Heart right ventricle (tissue), 16 donors: ENCODE measurements at regions of chr16 and their contacts with region 1.

Region 1: GRCh38 chr16:14529010-14529669 is 100.9 kb downstream of the PARN start:
- DNase-seq: peak; percentile 55 to 81
- ATAC-seq: peak; percentile 79 to 90 (median 85)
- H3K4me3 ChIP-seq: peak overlapping the region in 7 of 10 donors; percentile 22 to 38 (median 24)
- H3K27ac ChIP-seq: peak overlapping the region in 6 of 10 donors; percentile 28 to 68 (median 53)
- H3K4me1 ChIP-seq: peaks cover 0 to 26% (median 11%) of the 10 kb centered on the region in 9 donors
- H3K27me3 ChIP-seq: no peaks in the 10 kb centered on the region
- CTCF ChIP-seq: peak; percentile 53 to 88 (median 76)

Region 2: GRCh38 chr16:13926464-13926863 is 602.7 kb before region 1 on chr16:
- intact Hi-C with region 1: loop called in 9 of 10 experiments (anchors 5 to 10 kb)
- DNase-seq: no peak
- ATAC-seq: no peak
- H3K4me3 ChIP-seq: no peak overlapping the region
- H3K27ac ChIP-seq: no peak overlapping the region
- H3K4me1 ChIP-seq: peaks cover 0 to 17% (median 13%) of the 10 kb centered on the region in 9 donors
- H3K27me3 ChIP-seq: no peaks in the 10 kb centered on the region
- CTCF ChIP-seq: no peak

Region 3: GRCh38 chr16:14285513-14286385 is 243.4 kb before region 1 on chr16:
- intact Hi-C with region 1: loop called in 2 of 10 experiments (anchors 5 kb)
- DNase-seq: peak; percentile 92 to 94
- ATAC-seq: peak; percentile 94 to 96 (median 95)
- H3K4me3 ChIP-seq: peak overlapping the region; percentile 67 to 95 (median 86)
- H3K27ac ChIP-seq: peak overlapping the region; percentile 17 to 89 (median 82)
- H3K4me1 ChIP-seq: peaks cover 0 to 21% (median 15%) of the 10 kb centered on the region in 9 donors
- H3K27me3 ChIP-seq: no peaks in the 10 kb centered on the region
- CTCF ChIP-seq: peak in 1 of 9 donors; percentile 1

Region 4: DNA sequence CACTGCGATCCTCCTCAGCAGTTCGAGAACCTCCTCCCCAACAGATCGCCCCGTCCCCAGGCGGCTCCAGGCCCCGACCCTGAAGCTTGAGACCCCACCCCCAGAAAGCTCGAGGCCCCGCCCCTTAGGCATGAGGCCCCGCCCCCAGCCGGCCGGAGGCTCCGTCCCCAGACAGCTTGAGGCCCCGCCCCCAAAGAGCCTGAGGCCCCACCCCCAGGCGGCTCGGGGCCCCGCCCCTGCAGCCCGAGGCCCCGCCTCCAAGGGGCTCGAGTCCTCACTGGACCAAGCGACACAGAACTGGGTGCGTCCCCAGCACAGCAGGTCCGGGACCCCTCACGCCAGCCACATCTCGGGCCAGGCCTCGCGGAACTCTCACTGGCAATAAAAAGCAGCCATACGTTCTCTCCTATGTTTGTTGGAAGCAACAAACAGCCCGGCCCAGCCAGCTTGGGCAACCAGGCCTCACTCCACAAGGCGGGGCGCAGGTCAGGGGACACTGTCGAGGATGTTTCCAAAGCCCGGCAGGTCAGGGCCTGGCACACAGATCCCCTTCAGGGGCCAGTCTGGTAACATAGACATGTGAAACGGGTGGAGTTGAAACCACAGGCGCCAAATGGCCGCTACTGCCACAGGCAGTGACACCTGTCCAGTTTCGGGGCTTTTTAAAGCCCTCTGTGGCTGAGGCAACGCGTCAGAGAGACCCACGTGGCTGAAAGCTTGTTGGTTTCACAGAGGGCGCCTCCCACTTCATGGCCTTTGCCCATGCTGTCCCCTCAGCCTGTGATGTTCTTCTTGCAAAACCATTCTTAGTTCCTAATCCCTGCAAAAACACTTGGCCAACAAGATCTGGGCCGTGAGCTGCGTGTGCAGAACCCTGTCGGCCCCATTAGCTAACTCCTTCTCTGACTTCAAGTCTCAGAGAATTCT is 123.3 kb before region 1 on chr16:
- intact Hi-C with region 1: loop called in 1 of 10 experiments (anchors 10 kb)
- DNase-seq: peak in 1 of 2 donors; percentile 19
- ATAC-seq: peak in 3 of 8 donors; percentile 36 to 54 (median 49)
- H3K4me3 ChIP-seq: no peak overlapping the region
- H3K27ac ChIP-seq: no peak overlapping the region
- H3K4me1 ChIP-seq: peaks cover 0 to 4% (median 0%) of the 10 kb centered on the region in 9 donors
- H3K27me3 ChIP-seq: no peaks in the 10 kb centered on the region
- CTCF ChIP-seq: no peak

Region 5: GRCh38 chr16:14486520-14487303 is 42.4 kb before region 1 on chr16:
- intact Hi-C with region 1: loop called in 1 of 10 experiments (anchors 2 kb)
- DNase-seq: peak; percentile 53 to 87
- ATAC-seq: peak; percentile 85 to 89 (median 86)
- H3K4me3 ChIP-seq: peak overlapping the region in 9 of 10 donors; percentile 29 to 52 (median 48)
- H3K27ac ChIP-seq: peak overlapping the region; percentile 69 to 89 (median 79)
- H3K4me1 ChIP-seq: peaks cover 0 to 57% (median 32%) of the 10 kb centered on the region in 9 donors
- H3K27me3 ChIP-seq: no peaks in the 10 kb centered on the region
- CTCF ChIP-seq: no peak

Region 6: DNA sequence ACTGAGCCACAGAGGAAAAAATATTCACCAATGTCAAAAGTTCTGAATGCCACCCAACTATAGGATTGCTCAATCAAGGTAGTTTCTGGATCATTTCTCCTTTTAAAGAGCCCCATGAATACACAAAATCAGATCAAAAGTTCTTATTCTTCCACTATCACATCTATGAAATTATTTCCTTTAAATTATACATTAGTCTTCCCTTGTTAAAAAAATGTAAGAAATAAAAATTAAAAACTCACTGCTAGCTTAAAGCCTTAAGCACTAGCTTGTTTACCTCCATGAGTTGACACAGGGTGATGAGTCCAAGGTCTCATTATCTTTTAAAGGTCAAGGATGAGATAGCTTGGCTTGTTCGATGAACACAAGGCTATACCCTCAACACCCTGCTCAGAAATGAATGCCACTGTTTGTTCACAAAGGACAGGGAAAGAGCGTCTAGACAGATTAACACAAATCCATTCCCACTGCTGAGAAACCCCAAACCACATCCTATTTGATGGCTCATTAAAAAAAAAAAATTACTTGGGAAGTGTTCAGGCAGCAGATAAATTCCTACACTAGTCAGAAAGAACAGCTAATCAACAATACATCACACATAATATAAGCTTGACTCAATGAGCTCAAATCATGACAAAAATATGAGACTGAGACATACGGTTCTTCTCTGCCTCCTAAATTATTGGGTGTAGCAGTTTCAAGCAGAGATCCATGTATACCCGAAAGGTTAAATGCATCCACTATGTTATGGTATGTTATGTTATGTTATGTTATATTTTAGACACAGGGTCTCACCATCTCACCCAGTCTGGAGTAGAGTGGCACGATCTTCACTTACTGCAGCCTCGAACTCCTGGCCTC is 18.0 kb before region 1 on chr16:
- intact Hi-C with region 1: no loop called
- DNase-seq: no peak
- ATAC-seq: peak in 2 of 8 donors; percentile 27 to 33
- H3K4me3 ChIP-seq: no peak overlapping the region
- H3K27ac ChIP-seq: peak overlapping the region in 2 of 10 donors; percentile 12 to 63
- H3K4me1 ChIP-seq: peaks cover 0 to 33% (median 25%) of the 10 kb centered on the region in 9 donors
- H3K27me3 ChIP-seq: no peaks in the 10 kb centered on the region
- CTCF ChIP-seq: no peak